Calu3 (cell line): ENCODE measurements at regions of chr6 and their contacts with region 1.

Region 1: DNA sequence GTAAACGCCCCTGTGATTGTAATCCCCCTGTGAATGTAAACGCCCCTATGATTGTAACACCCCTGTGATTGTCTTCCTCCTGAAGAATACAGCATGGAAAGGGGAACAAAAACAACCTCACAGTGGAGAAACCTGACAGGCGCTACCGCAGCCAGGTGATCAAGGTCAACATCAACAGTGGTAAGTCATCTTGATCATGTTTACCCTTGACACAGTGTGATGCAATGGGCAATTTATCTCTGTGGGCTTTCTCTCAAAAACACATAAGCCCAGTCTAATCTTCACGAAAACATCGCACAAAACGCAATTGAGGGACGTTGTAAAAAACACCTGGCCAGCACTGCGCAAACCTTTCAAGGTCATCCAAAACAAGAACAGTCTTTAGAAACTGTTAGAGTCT is 277.2 kb downstream of the PRKN start:
- DNase-seq: no peak
- H3K4me3 Mint-ChIP-seq: no peak overlapping the region
- H3K27ac Mint-ChIP-seq: no peak overlapping the region
- H3K4me1 Mint-ChIP-seq: no peaks in the 10 kb centered on the region
- H3K27me3 Mint-ChIP-seq: no peaks in the 10 kb centered on the region
- CTCF ChIP-seq: no peak

Region 2: GRCh38 chr6:162343936-162344645 is 106.3 kb before region 1 on chr6:
- CTCF ChIA-PET with region 1: no interaction called
- intact Hi-C with region 1: loop called (anchors 10 kb)
- DNase-seq: peak; percentile 4
- H3K4me3 Mint-ChIP-seq: no peak overlapping the region
- H3K27ac Mint-ChIP-seq: no peak overlapping the region
- H3K4me1 Mint-ChIP-seq: no peaks in the 10 kb centered on the region
- H3K27me3 Mint-ChIP-seq: no peaks in the 10 kb centered on the region
- CTCF ChIP-seq: no peak

Region 3: GRCh38 chr6:162371121-162371520 is 79.2 kb before region 1 on chr6:
- CTCF ChIA-PET with region 1: no interaction called
- intact Hi-C with region 1: no loop called
- DNase-seq: no peak
- H3K4me3 Mint-ChIP-seq: no peak overlapping the region
- H3K27ac Mint-ChIP-seq: no peak overlapping the region
- H3K4me1 Mint-ChIP-seq: no peaks in the 10 kb centered on the region
- H3K27me3 Mint-ChIP-seq: no peaks in the 10 kb centered on the region
- CTCF ChIP-seq: no peak

Region 4: DNA sequence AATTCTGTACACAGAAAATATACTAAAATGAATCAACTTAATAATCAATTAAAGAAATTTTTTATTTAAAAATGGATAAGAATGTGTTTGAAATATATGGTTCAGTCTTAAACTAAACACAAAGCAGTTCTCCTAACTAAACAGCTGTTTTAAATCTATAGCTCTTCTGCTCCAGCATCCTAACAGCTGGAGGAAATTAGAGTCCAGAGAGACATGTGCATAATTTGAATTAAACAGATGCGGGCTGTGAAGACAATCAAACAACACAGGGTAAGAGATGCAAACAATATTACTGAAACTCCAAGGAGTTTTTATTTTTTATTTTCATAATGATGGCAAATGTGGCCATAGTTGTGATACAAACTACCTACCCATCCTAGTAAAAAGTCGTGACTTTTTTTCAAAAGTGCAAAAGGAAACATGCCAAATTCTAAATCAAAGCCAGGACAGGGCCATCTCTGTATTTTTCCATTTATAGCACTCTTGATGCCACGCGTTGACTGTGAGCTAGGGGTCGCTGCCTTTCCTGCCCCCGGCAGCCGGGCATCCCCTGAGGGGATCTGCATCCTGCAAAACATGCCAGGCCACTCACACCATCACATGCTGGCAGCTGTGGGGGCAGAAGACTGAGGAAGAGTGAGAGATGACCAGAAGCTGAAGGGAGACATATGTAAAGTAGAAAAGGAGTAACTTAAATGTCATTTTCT is 33.4 kb before region 1 on chr6:
- CTCF ChIA-PET with region 1: no interaction called
- intact Hi-C with region 1: no loop called
- DNase-seq: no peak
- H3K4me3 Mint-ChIP-seq: no peak overlapping the region
- H3K27ac Mint-ChIP-seq: no peak overlapping the region
- H3K4me1 Mint-ChIP-seq: no peaks in the 10 kb centered on the region
- H3K27me3 Mint-ChIP-seq: no peaks in the 10 kb centered on the region
- CTCF ChIP-seq: no peak